Activated CD4-positive, alpha-beta memory T cell treated with anti-CD3 and anti-CD28 coated beads, Interleukin-2, amount 10 ng/mL, durations not matched to agents 7 days and 5 days (primary cell): ENCODE measurements at regions of chr11 and their contacts with region 1.

Region 1: GRCh38 chr11:76207642-76208401 is 1.5 kb upstream of the WNT11 start:
- DNase-seq: peak; percentile 80
- H3K4me3 Mint-ChIP-seq: peak overlapping the region; percentile 74
- H3K27ac Mint-ChIP-seq: no peak overlapping the region
- H3K4me1 Mint-ChIP-seq: peaks cover 22% of the 10 kb centered on the region
- H3K27me3 Mint-ChIP-seq: peaks cover 71% of the 10 kb centered on the region

Region 2: DNA sequence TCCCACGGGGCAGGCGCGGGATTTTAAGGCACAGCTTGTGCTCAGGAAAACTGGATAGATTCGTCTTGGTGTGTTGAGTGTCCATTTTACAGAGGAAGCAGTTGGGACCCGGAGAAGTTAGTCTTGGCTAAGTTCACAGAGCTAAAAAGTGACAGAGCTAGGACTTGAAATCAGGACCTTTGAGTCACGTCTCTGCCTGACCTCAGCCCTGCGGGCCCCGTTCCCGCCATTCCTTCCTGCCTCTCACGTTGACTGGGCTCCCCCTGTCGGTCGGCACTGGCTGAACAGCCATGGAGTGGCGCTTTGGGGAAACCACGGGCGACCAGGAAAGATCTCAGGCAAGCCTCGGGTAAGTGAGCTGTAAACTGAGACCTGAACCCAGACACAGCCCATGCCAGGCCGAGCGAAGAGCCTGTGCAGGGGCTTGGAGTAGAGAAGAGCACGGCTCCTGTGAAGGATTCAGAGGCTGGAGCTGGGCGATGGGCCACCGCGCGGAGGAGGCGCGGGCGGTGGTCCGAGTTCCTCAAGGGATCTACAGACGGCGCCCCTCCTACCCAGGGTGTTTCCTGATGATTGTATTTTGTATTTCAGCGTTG is 55.6 kb before region 1 on chr11:
- CTCF ChIA-PET with region 1: interaction called, 14 read pairs
- POLR2A ChIA-PET with region 1: no interaction called
- DNase-seq: peak; percentile 85
- H3K4me3 Mint-ChIP-seq: peak overlapping the region; percentile 59
- H3K27ac Mint-ChIP-seq: no peak overlapping the region
- H3K4me1 Mint-ChIP-seq: peaks cover 26% of the 10 kb centered on the region
- H3K27me3 Mint-ChIP-seq: peaks cover 37% of the 10 kb centered on the region

Region 3: DNA sequence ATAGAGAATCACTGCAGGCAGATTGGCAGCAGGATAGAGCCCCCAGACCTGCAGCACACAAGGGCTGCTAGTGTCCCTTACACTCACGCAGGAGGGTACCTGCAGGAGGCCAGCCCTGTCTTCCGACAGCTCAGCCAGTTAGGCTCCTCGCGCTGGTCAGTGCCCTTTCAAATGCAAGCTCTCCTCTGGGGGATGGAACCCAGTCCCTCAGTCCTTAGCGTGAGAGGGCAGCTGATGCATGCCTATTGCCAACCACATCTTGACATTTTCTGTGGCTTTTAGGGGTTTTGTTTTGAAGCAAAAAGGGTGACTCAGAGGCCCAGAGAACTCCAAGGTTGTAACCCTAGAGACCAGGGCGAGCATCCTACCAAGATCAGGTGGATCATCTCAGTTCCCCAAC is 41.5 kb before region 1 on chr11:
- CTCF ChIA-PET with region 1: no interaction called
- POLR2A ChIA-PET with region 1: no interaction called
- DNase-seq: peak; percentile 35
- H3K4me3 Mint-ChIP-seq: no peak overlapping the region
- H3K27ac Mint-ChIP-seq: no peak overlapping the region
- H3K4me1 Mint-ChIP-seq: peaks cover 13% of the 10 kb centered on the region
- H3K27me3 Mint-ChIP-seq: peaks cover 7% of the 10 kb centered on the region

Region 4: DNA sequence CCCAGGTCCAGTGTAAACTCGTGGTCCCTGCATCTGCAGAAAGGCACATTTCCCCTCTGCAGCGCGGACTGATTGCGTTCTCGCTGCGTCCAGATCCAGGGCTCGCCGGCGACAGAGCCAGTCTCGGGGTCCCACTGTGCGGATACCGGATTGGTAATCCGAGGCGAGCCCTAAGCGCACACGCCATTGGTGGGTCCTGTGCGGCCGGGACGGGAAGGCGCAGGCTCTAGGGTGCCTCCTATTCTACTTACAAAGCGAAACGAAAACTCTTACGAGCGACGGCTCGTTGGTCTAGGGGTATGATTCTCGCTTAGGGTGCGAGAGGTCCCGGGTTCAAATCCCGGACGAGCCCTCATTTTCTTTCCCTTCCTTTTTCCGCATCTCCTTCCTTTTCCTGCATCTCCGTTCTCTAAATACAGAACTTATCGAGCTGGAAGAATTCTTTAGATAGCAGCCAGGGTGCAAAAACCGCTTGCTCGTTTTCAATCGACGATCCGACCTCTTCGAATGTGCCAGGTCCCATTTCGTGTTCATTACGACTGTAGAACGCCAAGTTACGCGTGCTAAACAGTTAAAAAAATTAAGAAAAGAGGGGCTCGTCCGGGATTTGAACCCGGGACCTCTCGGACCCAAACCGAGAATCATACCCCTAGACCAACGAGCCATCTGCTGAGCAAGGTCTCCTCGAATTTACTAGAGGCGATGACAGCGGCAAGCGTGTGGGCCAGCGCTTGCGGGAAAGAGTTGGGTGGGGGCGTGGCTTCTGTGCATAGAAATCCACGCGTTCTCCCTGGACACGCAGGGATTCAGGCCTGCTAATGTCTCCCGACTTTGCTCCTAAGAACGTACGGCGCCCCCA is 27.6 kb after region 1 on chr11:
- CTCF ChIA-PET with region 1: interaction called, 66 read pairs
- POLR2A ChIA-PET with region 1: interaction called, 24 read pairs
- DNase-seq: peak; percentile 93
- H3K4me3 Mint-ChIP-seq: peak overlapping the region; percentile 88
- H3K27ac Mint-ChIP-seq: peak overlapping the region; percentile 88
- H3K4me1 Mint-ChIP-seq: peaks cover 51% of the 10 kb centered on the region
- H3K27me3 Mint-ChIP-seq: peaks cover 35% of the 10 kb centered on the region

Region 5: DNA sequence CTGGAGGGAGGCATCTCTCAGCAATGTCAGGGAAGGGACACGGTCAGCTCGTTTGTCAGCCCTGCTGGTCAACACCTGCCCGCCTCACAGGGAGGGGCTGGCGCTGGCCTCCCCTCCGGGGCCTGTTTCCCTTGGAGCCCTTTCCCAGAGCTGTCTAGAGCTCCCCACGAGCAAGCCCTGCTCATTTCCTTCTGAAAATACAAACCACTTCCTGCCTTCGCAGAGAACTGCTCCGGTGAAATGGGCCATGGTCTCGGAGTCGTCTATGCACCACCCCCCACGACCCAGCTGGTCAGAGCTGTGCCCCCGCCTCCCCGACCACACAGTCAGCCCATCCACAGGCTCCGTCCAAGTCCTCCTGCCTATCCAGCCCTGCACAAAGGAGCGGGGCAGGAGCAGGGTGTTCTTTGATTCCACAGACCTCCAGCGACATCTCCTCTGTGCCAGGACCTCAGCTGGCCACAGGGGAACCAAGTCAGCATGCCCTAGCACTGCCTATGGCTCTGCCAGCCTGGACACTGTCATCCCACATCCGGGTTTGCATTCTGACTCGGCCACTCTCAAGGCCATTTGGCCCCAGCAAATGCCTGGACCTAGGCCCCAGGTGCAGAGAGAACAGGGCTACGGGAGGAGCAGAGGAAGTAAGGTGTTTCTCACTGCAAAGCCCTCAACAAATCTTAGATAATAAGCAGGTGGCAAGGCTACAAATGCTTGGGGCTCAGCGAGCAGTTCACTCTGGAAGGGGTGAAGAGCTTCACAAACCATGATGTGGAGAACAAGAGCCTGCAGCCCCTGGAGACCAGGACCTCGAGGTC is 80.6 kb after region 1 on chr11:
- CTCF ChIA-PET with region 1: interaction called, 19 read pairs
- POLR2A ChIA-PET with region 1: no interaction called
- DNase-seq: peak; percentile 26
- H3K4me3 Mint-ChIP-seq: no peak overlapping the region
- H3K27ac Mint-ChIP-seq: peak overlapping the region; percentile 31
- H3K4me1 Mint-ChIP-seq: peaks cover 22% of the 10 kb centered on the region
- H3K27me3 Mint-ChIP-seq: peaks cover 14% of the 10 kb centered on the region

Region 6: DNA sequence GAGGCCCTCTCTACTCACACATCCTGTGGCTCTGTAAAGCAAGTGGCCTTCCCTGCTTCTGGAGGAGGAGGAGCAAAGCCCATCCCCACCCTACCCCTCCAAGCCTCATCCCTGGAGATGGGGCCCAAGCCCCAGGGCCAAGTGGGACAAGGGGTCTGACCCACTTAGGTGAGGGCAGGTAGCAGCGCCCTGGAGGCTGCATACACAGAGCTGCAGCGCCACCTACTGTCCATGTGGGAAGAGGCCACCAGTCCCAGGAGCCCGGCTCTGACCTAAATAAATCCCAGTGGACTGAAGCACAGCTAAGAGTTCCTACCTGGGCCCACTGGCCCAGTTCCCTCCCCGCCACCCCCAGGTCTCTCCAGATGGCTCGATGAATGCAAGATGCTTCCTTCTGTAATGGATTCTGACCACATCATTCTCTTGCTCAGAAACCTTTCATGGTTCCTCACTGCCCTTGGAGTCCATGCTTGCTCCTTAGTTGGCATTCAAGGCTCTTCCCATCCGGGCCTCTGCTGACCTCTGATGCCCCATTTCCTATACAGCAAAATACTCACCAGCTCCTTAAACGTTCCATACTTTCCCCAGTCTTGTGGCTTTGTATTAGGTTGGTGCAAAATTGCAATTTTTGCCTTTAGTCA is 111.0 kb after region 1 on chr11:
- CTCF ChIA-PET with region 1: interaction called, 105 read pairs
- POLR2A ChIA-PET with region 1: interaction called, 8 read pairs
- DNase-seq: peak; percentile 84
- H3K4me3 Mint-ChIP-seq: no peak overlapping the region
- H3K27ac Mint-ChIP-seq: no peak overlapping the region
- H3K4me1 Mint-ChIP-seq: peaks cover 23% of the 10 kb centered on the region
- H3K27me3 Mint-ChIP-seq: peaks cover 33% of the 10 kb centered on the region

Region 7: DNA sequence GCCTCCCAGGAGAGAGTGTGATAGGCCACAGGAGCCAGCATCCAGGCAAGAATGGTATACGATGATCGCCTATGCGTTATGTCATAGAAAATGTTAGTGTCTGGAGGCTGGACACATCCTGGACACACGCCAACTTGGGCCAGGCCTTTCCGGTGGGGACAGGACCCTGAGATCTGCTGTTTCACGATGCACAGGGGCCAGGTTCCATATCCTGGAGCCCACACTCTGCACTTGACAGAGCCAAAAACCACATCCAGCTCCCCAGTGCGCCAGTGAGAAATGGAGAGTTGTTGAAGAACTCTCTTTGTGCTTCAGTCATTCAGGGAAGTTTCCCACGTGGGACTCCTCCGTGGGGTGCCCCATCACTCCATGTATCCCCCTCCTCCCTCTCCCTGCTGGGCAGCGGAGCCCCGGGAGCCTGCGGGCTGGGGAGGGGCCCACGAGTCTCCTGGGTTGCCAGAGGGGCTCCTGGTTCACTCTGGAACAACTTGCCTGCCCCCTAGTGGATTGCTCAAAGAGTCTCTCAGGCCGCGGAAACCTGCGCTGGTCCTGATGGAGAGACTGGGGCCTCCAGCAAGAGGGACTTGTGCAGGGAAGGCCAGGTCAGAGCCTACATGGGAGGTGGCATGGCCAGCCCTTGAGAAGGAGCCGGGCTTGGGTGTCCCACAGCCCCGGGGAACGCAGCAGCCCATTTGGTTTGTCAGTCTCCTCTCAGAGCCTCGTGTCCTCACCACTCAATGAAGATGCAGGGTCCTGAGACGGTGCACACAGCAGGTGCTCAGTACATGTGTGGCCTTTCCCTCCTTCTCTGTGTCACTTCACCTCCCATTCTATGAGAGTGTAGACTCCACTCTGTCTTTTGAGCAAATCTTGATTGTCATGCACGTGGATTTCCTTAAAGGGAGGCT is 472.9 kb after region 1 on chr11:
- CTCF ChIA-PET with region 1: interaction called, 27 read pairs
- POLR2A ChIA-PET with region 1: interaction called, 4 read pairs
- DNase-seq: peak; percentile 72
- H3K4me3 Mint-ChIP-seq: no peak overlapping the region
- H3K27ac Mint-ChIP-seq: no peak overlapping the region
- H3K4me1 Mint-ChIP-seq: peaks cover 31% of the 10 kb centered on the region
- H3K27me3 Mint-ChIP-seq: peaks cover 2% of the 10 kb centered on the region